Right ventricle myocardium inferior (tissue), 1 donor: ENCODE measurements at regions of chr19 and their contacts with region 1.

Region 1: GRCh38 chr19:11035441-11036377 is 53.6 kb upstream of the LDLR start:
- DNase-seq: peak; percentile 95
- ATAC-seq: peak; percentile 95

Region 2: DNA sequence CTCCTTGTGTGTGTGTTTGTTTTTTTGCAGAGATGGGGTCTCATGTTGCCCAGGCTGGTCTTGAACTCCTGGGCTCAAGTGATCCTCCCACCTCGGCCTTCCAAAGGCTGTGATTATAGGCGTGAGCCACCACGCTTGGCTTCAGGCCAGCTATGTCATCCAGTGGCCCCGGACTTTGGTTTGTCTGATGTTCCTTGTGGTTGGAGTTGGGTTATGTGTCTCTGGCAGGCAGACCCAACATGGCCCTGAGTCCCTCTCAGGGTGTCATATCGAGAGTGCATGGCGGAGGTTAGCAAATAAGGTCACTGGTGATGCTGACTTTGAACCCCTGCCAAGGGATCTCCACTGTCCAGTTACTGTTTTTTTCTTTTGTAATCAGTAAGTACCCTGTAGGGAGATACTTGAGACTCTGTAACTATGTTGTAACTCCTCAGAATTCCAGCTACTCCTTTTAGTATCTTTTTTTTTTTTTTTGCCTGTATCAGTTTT is 37.6 kb before region 1 on chr19:
- intact Hi-C with region 1: loop called (anchors 2 kb)
- DNase-seq: no peak
- ATAC-seq: no peak

Region 3: GRCh38 chr19:11090054-11090900 is 54.6 kb after region 1 on chr19:
- intact Hi-C with region 1: loop called (anchors 5 kb)
- DNase-seq: peak; percentile 100
- ATAC-seq: peak; percentile 93

Region 4: DNA sequence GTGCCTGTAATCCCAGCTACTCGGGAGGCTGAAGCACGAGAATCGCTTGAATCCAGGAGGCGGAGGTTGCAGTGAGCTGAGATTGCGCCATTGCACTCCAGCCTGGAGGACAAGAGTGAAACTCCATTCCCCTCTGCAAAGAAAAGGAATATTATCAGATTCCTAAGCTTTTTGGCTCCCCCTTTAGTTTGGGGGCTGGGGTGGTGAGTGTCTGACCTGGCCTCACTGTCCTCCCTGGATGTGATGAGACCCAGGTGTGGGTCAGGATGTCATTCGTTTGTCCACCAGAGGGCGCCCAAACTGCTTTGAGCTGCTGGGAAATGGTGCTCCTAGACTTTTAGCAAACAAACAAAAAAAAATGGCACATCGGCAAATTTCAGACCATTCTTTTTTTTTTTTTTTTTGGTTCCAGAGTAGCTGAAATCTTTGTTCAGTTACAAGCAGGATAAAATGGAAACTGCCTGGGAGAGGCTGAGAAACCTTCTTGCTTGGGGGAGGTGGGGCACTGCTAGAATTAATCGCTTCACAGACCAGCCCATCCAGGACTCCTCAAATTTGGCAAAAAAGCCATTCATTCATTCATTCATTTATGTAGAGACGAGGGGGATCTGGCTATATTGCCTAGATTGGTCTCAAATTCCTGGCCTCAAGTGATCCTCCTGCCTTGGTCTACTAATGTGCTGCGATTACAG is 90.4 kb after region 1 on chr19:
- intact Hi-C with region 1: loop called (anchors 2 kb)
- DNase-seq: peak; percentile 78
- ATAC-seq: peak; percentile 69

Region 5: GRCh38 chr19:11203194-11204075 is 167.7 kb after region 1 on chr19:
- intact Hi-C with region 1: loop called (anchors 5 kb)
- DNase-seq: peak; percentile 84
- ATAC-seq: peak; percentile 75